CD8-positive, alpha-beta T cell (primary cell): ENCODE measurements at regions of chr3 and their contacts with region 1.

Region 1: DNA sequence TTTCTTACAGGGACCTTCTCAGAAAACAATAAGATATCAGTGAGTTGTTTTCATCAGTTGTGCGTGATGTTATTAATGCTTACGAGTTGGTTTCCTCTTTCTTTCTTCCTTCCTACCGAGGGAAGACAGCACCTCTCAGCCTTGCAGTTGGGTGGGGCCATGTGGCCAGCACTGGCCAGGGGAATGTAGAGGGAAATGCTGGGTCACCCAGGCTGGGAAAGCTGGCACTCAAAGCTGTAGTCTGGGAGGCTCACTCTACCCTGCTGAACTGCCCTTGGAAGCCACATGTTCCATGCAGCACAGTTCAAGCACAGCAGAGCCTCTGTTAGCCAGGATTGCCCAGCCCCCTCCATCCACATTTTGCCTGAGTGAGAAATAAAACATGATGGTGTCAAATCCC is 10.1 kb upstream of the CHCHD6 start:
- DNase-seq: no peak
- ATAC-seq: no peak
- H3K4me3 ChIP-seq: no peak overlapping the region
- H3K4me3 Mint-ChIP-seq: no peak overlapping the region
- H3K27ac ChIP-seq: no peak overlapping the region
- H3K27ac Mint-ChIP-seq: no peak overlapping the region
- H3K4me1 ChIP-seq: no peaks in the 10 kb centered on the region
- H3K4me1 Mint-ChIP-seq: no peaks in the 10 kb centered on the region
- H3K27me3 ChIP-seq: peaks cover 0 to 5% of the 10 kb centered on the region in 2 experiments
- H3K27me3 Mint-ChIP-seq: peaks cover 46% of the 10 kb centered on the region
- CTCF ChIP-seq: no peak

Region 2: GRCh38 chr3:126711128-126711760 is 17.3 kb after region 1 on chr3:
- CTCF ChIA-PET with region 1: no interaction called
- POLR2A ChIA-PET with region 1: no interaction called
- intact Hi-C with region 1: loop called in 1 of 2 experiments (anchors 2 kb)
- DNase-seq: no peak
- ATAC-seq: no peak
- H3K4me3 ChIP-seq: no peak overlapping the region
- H3K4me3 Mint-ChIP-seq: no peak overlapping the region
- H3K27ac ChIP-seq: no peak overlapping the region
- H3K27ac Mint-ChIP-seq: no peak overlapping the region
- H3K4me1 ChIP-seq: no peaks in the 10 kb centered on the region
- H3K4me1 Mint-ChIP-seq: peaks cover 5% of the 10 kb centered on the region
- H3K27me3 ChIP-seq: no peaks in the 10 kb centered on the region
- H3K27me3 Mint-ChIP-seq: no peaks in the 10 kb centered on the region
- CTCF ChIP-seq: no peak